ENCODE measurements at regions of chr12 and their contacts with region 1.

Region 1: GRCh38 chr12:15584366-15585041 is 204.7 kb downstream of the EPS8 start:
- DNase-seq: peak; percentile 50
- ATAC-seq: peak; percentile 58
- H3K4me3 Mint-ChIP-seq: no peak overlapping the region
- H3K27ac Mint-ChIP-seq: no peak overlapping the region
- H3K4me1 Mint-ChIP-seq: peaks cover 12% of the 10 kb centered on the region
- H3K27me3 Mint-ChIP-seq: no peaks in the 10 kb centered on the region
- CTCF ChIP-seq: peak; percentile 88

Region 2: DNA sequence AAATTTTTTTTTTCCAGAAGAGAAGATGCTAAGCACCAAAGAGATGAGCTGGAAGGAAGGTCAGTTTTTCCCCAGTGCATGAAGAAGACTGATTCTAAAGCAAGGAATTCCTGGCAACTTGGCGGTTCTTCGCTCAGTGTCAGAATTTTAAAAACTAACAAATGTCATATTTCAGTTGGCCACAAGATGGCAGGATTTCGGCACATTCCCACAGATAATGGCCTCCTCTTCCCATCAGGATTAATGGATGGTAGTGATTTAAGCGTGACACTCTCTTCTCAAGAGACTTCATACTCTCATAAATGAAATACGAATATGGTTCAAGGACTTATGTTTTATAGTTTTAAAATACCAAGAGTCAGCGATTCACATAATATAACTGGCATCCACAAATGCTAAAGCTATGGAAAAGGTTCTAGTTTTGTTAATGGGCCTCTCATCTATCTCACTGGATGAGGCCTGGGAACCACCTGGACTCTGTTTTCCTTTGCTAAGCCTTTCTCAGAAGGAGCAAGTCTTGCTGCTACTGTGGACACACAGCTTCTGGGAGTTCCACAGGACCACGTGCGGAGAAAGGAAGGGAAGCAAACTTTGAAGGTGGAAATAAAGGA is 308.3 kb before region 1 on chr12:
- CTCF ChIA-PET with region 1: interaction called, 22 read pairs
- POLR2A ChIA-PET with region 1: no interaction called
- intact Hi-C with region 1: loop called (anchors 5 kb)
- DNase-seq: no peak
- ATAC-seq: no peak
- H3K4me3 Mint-ChIP-seq: no peak overlapping the region
- H3K27ac Mint-ChIP-seq: no peak overlapping the region
- H3K4me1 Mint-ChIP-seq: peaks cover 9% of the 10 kb centered on the region
- H3K27me3 Mint-ChIP-seq: peaks cover 12% of the 10 kb centered on the region
- CTCF ChIP-seq: peak; percentile 79

Region 3: GRCh38 chr12:15522565-15523187 is 61.8 kb before region 1 on chr12:
- CTCF ChIA-PET with region 1: interaction called, 510 read pairs
- POLR2A ChIA-PET with region 1: no interaction called
- intact Hi-C with region 1: no loop called
- DNase-seq: no peak
- ATAC-seq: no peak
- H3K4me3 Mint-ChIP-seq: no peak overlapping the region
- H3K27ac Mint-ChIP-seq: no peak overlapping the region
- H3K4me1 Mint-ChIP-seq: peaks cover 7% of the 10 kb centered on the region
- H3K27me3 Mint-ChIP-seq: peaks cover 20% of the 10 kb centered on the region
- CTCF ChIP-seq: peak; percentile 51

Region 4: DNA sequence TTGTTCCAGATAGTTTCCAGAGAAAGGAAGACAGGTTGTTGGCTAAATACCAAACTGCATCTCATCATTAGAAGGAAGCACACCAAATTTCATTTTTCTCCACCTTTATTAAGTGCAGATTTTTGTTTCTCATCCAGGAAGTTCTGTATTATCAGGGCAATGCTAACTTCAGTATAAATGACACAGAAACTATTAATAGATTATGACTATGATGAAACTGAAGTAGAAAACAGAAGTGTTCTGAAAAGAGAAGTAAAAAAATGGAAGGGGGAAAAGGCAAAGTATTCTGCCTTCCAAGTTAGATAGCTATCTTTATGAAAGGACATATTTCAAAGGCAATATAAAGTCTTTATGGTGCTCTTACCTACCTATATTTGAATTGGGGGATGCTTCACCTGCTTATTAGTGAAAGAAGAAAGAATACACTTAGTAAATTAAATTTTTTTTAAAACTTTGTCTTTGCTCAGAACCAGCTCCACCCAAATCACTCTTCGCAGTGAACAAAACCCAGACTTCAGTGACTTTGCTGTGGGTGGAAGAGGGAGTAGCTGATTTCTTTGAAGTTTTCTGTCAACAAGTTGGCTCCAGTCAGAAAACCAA is 38.3 kb before region 1 on chr12:
- CTCF ChIA-PET with region 1: interaction called, 29 read pairs
- POLR2A ChIA-PET with region 1: no interaction called
- intact Hi-C with region 1: no loop called
- DNase-seq: peak; percentile 17
- ATAC-seq: peak; percentile 62
- H3K4me3 Mint-ChIP-seq: peak overlapping the region; percentile 20
- H3K27ac Mint-ChIP-seq: peak overlapping the region; percentile 86
- H3K4me1 Mint-ChIP-seq: peaks cover 35% of the 10 kb centered on the region
- H3K27me3 Mint-ChIP-seq: no peaks in the 10 kb centered on the region
- CTCF ChIP-seq: no peak

Region 5: GRCh38 chr12:15563663-15564062 is 20.8 kb before region 1 on chr12:
- CTCF ChIA-PET with region 1: interaction called, 34 read pairs
- POLR2A ChIA-PET with region 1: no interaction called
- intact Hi-C with region 1: no loop called
- DNase-seq: peak; percentile 54
- ATAC-seq: peak; percentile 83
- H3K4me3 Mint-ChIP-seq: peak overlapping the region; percentile 54
- H3K27ac Mint-ChIP-seq: peak overlapping the region; percentile 90
- H3K4me1 Mint-ChIP-seq: peaks cover 47% of the 10 kb centered on the region
- H3K27me3 Mint-ChIP-seq: no peaks in the 10 kb centered on the region
- CTCF ChIP-seq: no peak

Region 6: GRCh38 chr12:15856097-15856982 is 271.8 kb after region 1 on chr12:
- CTCF ChIA-PET with region 1: interaction called, 93 read pairs
- POLR2A ChIA-PET with region 1: no interaction called
- intact Hi-C with region 1: no loop called
- DNase-seq: peak; percentile 61
- ATAC-seq: peak; percentile 45
- H3K4me3 Mint-ChIP-seq: no peak overlapping the region
- H3K27ac Mint-ChIP-seq: no peak overlapping the region
- H3K4me1 Mint-ChIP-seq: no peaks in the 10 kb centered on the region
- H3K27me3 Mint-ChIP-seq: peaks cover 18% of the 10 kb centered on the region
- CTCF ChIP-seq: peak; percentile 78

Measured in activated CD8-positive, alpha-beta T cell treated with anti-CD3 and anti-CD28 coated beads for 36 hours (primary cell).